Activated CD4-positive, alpha-beta memory T cell treated with anti-CD3 and anti-CD28 coated beads for 36 hours (primary cell): ENCODE measurements at regions of chr2 and their contacts with region 1.

Region 1: DNA sequence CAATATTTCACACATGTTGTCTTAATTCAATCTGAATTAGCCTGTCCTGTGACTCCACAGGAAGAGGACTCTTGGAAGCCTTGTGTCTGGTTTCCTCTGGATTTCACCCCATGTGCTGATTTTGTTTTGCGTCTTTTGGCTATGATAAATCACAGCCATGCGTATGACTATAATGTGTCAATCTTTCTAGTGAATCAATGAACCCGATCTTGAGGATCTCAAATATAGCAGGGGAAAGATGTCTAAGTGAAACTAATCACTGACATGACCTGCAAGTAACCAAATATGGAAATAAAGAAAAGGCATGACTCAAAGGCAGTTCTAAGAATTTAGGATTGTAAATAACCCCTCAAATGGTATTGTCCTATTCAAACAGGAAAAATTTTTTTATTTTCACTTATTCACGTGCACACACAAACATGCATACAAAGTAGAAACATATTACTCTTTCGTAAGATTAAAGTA is 8.2 kb downstream of the WDFY1 start:
- DNase-seq: no peak
- H3K4me3 Mint-ChIP-seq: peak overlapping the region; percentile 29
- H3K27ac Mint-ChIP-seq: peak overlapping the region; percentile 79
- H3K4me1 Mint-ChIP-seq: peaks cover 72% of the 10 kb centered on the region
- H3K27me3 Mint-ChIP-seq: no peaks in the 10 kb centered on the region

Region 2: DNA sequence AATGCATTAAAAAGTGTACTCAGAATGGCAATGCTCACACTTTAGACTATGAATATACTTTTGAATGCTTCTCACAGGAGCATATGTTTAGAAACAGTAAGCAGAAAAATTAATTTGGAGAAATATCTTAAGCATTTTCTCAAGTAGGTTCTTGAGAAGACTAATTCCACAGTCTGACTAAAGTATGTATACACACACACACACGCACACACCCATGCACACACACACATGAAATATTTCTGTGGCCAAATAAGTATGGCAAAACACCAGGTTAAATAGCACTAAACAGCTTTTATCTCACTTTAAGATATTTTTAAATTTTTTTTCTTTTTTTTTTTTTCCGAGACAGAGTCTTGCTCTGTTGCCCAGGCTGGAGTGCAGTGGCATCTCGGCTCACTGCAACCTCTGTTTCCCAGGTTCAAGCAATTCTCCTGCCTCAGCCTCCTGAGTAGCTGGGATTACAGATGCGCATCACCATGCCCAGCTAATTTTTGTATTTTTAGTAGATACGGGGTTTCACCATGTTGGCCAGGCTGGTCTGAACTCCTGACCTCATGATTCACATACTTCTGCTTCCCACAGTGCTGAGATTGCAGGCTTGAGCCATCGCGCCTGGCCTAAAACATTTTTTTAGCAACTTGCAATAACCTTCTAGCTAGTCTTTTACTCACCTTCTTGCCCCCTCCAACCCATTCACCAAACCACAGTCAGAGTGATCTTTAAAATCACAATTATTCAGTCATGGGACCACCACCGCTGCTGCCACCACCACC is 267.3 kb before region 1 on chr2:
- CTCF ChIA-PET with region 1: no interaction called
- POLR2A ChIA-PET with region 1: no interaction called
- intact Hi-C with region 1: no loop called
- DNase-seq: no peak
- H3K4me3 Mint-ChIP-seq: no peak overlapping the region
- H3K27ac Mint-ChIP-seq: no peak overlapping the region
- H3K4me1 Mint-ChIP-seq: no peaks in the 10 kb centered on the region
- H3K27me3 Mint-ChIP-seq: peaks cover 1% of the 10 kb centered on the region

Region 3: GRCh38 chr2:223696719-223697118 is 240.2 kb before region 1 on chr2:
- CTCF ChIA-PET with region 1: no interaction called
- POLR2A ChIA-PET with region 1: no interaction called
- intact Hi-C with region 1: loop called (anchors 5 kb)
- DNase-seq: no peak
- H3K4me3 Mint-ChIP-seq: no peak overlapping the region
- H3K27ac Mint-ChIP-seq: no peak overlapping the region
- H3K4me1 Mint-ChIP-seq: peaks cover 10% of the 10 kb centered on the region
- H3K27me3 Mint-ChIP-seq: peaks cover 2% of the 10 kb centered on the region

Region 4: DNA sequence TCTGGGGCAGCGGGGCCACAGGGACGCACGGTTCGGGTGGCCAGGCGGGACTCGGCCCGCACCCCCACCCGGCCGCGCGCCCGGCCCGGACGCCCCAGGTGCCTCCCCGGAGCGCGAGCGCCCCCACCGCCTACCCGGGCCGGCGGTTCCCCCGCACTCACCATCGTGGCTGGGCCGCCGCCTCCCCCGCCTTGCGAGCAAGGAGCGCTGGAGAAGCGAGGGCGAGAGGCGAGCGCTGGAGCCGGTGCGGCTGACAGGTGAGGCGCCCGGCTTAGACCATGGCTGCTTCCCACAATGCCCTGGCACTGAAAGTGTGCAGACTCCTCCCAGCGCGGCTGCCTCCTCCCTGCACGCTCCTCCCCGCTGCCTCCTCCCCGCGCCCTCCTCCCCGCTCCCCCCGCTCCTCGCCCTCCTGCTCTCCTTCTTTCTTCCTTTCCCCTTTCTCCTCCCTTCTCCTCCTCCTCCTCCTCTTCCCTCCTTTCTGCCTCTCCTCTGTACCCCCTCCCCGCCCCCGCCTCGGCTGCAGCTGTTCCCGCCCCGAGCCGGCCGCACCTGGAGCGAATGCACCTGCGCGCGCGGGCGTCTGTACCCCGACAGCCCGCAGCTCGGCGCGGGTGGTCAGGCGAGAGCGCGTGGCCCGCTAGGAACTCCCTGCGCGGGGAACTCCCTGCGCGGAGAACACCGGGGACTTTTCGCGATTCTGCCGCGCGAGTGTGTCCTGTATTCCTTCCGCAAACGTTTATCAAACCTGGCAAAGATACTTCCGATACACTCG is 99.4 kb before region 1 on chr2 and contains the start of gene AP1S3:
- CTCF ChIA-PET with region 1: no interaction called
- POLR2A ChIA-PET with region 1: no interaction called
- intact Hi-C with region 1: loop called (anchors 5 kb)
- DNase-seq: peak; percentile 83
- H3K4me3 Mint-ChIP-seq: peak within 1 kb of the TSS; percentile 94
- H3K27ac Mint-ChIP-seq: no peak within 1 kb of the TSS
- H3K4me1 Mint-ChIP-seq: peaks cover 11% of the 10 kb centered on the region
- H3K27me3 Mint-ChIP-seq: no peaks in the 10 kb centered on the region
- total RNA-seq, gene AP1S3: 10.1 to 12.1 TPM

Region 5: DNA sequence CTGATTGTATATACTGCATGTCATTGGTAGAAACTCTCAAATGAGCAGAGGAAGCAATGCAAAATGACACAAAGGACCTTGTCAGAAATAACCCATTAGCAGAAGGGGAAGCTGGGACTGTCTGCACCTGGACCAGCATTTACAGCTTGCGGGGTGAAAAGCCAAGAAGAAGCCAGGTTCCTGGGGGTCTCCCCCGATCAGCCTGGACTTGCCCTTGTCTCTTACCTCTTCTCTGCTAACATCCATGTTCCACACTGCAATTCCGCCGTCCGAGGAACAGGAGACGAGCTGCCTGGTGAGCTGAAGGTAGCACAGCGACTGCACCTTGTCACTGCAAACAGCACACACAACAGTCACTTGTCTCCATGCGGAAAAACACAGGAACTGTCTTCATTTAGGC is 42.9 kb before region 1 on chr2:
- CTCF ChIA-PET with region 1: interaction called, 3 read pairs
- POLR2A ChIA-PET with region 1: interaction called, 3 read pairs
- intact Hi-C with region 1: loop called (anchors 2 kb)
- DNase-seq: no peak
- H3K4me3 Mint-ChIP-seq: no peak overlapping the region
- H3K27ac Mint-ChIP-seq: no peak overlapping the region
- H3K4me1 Mint-ChIP-seq: peaks cover 35% of the 10 kb centered on the region
- H3K27me3 Mint-ChIP-seq: no peaks in the 10 kb centered on the region